Psoas muscle (tissue), 8 donors: ENCODE measurements at regions of chr1 and their contacts with region 1.

Region 1: GRCh38 chr1:119275145-119276134 is 93.1 kb upstream of the HAO2 start:
- DNase-seq: no peak
- ATAC-seq: peak in 2 of 4 donors; percentile 60 to 77
- H3K4me3 ChIP-seq: no peak overlapping the region
- H3K27ac ChIP-seq: no peak overlapping the region
- H3K4me1 ChIP-seq: no peaks in the 10 kb centered on the region
- H3K27me3 ChIP-seq: no peaks in the 10 kb centered on the region
- CTCF ChIP-seq: peak; percentile 74

Region 2: GRCh38 chr1:119160866-119161265 is 114.6 kb before region 1 on chr1:
- intact Hi-C with region 1: no loop called
- DNase-seq: no peak
- ATAC-seq: no peak
- H3K4me3 ChIP-seq: no peak overlapping the region
- H3K27ac ChIP-seq: peak overlapping the region; percentile 37
- H3K4me1 ChIP-seq: no peaks in the 10 kb centered on the region
- H3K27me3 ChIP-seq: no peaks in the 10 kb centered on the region
- CTCF ChIP-seq: no peak

Region 3: DNA sequence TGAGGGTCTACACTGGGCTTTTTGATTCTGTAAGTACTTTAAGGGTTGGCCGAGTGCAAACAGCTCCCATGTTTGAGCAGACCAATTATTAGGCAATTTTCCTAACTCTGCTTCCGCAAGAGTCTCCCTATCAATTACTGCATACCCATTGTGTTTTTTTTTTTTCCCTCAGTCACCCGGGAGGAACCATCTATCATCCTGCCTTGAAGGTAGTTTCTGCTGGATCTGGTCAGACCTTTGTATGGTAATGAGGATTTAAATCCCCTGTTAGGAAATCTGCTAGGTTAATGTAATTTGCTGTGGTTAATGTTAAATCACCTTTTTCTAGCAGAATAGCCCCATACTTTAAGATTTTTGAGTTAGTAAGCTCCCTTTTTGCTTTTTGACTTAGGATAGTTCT is 94.2 kb before region 1 on chr1:
- intact Hi-C with region 1: no loop called
- DNase-seq: no peak
- ATAC-seq: no peak
- H3K4me3 ChIP-seq: no peak overlapping the region
- H3K27ac ChIP-seq: no peak overlapping the region
- H3K4me1 ChIP-seq: no peaks in the 10 kb centered on the region
- H3K27me3 ChIP-seq: no peaks in the 10 kb centered on the region
- CTCF ChIP-seq: no peak

Region 4: DNA sequence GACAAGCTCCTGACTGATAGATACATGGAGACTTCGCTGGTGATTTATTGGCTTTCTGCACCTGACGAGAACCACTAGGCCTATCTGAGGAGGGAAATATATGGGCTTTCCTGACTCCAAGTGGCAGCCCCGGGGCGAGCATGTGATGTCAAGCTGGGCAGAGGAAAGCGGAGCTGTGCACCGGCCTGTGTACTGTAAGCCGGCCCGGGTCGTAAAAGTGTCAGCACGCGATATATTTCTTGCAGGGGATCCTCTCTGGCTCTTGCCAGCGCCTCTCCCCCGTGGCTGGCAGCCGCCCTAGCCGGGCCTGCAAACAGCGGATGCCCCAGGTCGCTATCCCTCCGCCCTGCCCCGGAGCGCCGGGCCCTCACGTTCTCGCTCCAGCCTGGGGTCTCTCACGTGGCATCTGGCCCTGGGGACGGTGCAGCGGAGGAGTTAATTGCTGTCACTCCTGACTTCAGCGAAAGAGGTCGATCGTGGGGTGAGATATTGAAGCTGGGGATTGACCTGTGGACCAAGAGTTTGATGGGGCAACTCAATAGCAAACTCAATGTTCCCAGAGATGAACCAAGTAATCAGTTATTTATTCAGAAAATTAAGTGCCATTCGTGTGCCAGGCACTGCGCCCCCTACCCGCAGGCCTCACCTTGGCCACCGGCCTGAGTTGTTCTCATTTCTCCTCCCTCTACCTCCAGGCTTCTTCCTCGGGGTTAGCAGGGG is 52.2 kb after region 1 on chr1:
- intact Hi-C with region 1: loop called in 1 of 2 experiments (anchors 5 kb)
- DNase-seq: peak; percentile 14 to 61
- ATAC-seq: peak in 3 of 4 donors; percentile 66 to 80 (median 77)
- H3K4me3 ChIP-seq: peak overlapping the region; percentile 63
- H3K27ac ChIP-seq: no peak overlapping the region
- H3K4me1 ChIP-seq: peaks cover 3% of the 10 kb centered on the region
- H3K27me3 ChIP-seq: no peaks in the 10 kb centered on the region
- CTCF ChIP-seq: peak; percentile 12

Region 5: GRCh38 chr1:119367427-119368124 is 92.1 kb after region 1 on chr1:
- intact Hi-C with region 1: loop called in 1 of 2 experiments (anchors 5 kb)
- DNase-seq: no peak
- ATAC-seq: peak in 1 of 4 donors; percentile 51
- H3K4me3 ChIP-seq: no peak overlapping the region
- H3K27ac ChIP-seq: no peak overlapping the region
- H3K4me1 ChIP-seq: no peaks in the 10 kb centered on the region
- H3K27me3 ChIP-seq: no peaks in the 10 kb centered on the region
- CTCF ChIP-seq: peak; percentile 66

Region 6: DNA sequence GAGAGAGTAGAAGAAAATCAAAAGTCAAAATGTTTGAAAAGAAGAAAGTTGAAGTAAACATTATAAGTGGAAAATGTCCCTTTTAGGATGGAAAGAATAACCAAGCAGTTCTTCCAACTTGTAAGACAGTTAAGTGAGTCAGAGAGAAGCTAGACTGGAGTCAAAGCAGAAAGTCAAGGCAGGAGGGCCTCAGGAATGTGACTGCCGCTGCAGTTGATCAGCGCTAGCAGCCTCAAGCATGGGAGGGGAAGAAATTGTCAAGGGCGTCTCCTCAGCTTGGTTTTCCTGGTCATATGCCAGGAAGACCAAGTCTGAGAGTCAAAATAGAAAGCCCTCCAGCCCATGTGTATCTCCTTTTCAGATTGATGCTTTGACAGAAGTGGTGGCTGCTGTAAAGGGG is 116.3 kb after region 1 on chr1:
- intact Hi-C with region 1: no loop called
- DNase-seq: no peak
- ATAC-seq: no peak
- H3K4me3 ChIP-seq: no peak overlapping the region
- H3K27ac ChIP-seq: no peak overlapping the region
- H3K4me1 ChIP-seq: no peaks in the 10 kb centered on the region
- H3K27me3 ChIP-seq: peaks cover 0 to 4% (median 0%) of the 10 kb centered on the region in 3 donors
- CTCF ChIP-seq: no peak